ENCODE measurements at regions of chr7 and their contacts with region 1.

Region 1: GRCh38 chr7:156792611-156793010 is 100.4 kb downstream of the LMBR1 start:
- DNase-seq: no peak
- H3K4me3 ChIP-seq: no peak overlapping the region
- H3K27ac ChIP-seq: no peak overlapping the region
- H3K4me1 ChIP-seq: no peaks in the 10 kb centered on the region
- H3K27me3 ChIP-seq: no peaks in the 10 kb centered on the region
- CTCF ChIP-seq: no peak
- POLR2A ChIP-seq: no peak

Region 2: GRCh38 chr7:156780724-156781455 is 11.7 kb before region 1 on chr7:
- CTCF ChIA-PET with region 1: interaction called, 10 read pairs
- POLR2A ChIA-PET with region 1: no interaction called
- dilution Hi-C with region 1: no loop called
- intact Hi-C with region 1: no loop called
- DNase-seq: no peak
- H3K4me3 ChIP-seq: no peak overlapping the region
- H3K27ac ChIP-seq: no peak overlapping the region
- H3K4me1 ChIP-seq: no peaks in the 10 kb centered on the region
- H3K27me3 ChIP-seq: no peaks in the 10 kb centered on the region
- CTCF ChIP-seq: no peak
- POLR2A ChIP-seq: no peak

Measured in endothelial cell of umbilical vein (primary cell).